Spleen (tissue), 13 donors: ENCODE measurements at regions of chr10 and their contacts with region 1.

Region 1: GRCh38 chr10:95246579-95247051 is 44.2 kb downstream of the PDLIM1 start:
- DNase-seq: peak; percentile 84
- H3K4me3 ChIP-seq: no peak overlapping the region
- H3K27ac ChIP-seq: peak overlapping the region in 6 of 8 donors; percentile 21 to 77 (median 38)
- H3K4me1 ChIP-seq: peaks cover 6 to 45% (median 28%) of the 10 kb centered on the region in 6 donors
- H3K27me3 ChIP-seq: no peaks in the 10 kb centered on the region
- CTCF ChIP-seq: peak; percentile 37 to 88 (median 81)
- POLR2A ChIP-seq: no peak

Region 2: DNA sequence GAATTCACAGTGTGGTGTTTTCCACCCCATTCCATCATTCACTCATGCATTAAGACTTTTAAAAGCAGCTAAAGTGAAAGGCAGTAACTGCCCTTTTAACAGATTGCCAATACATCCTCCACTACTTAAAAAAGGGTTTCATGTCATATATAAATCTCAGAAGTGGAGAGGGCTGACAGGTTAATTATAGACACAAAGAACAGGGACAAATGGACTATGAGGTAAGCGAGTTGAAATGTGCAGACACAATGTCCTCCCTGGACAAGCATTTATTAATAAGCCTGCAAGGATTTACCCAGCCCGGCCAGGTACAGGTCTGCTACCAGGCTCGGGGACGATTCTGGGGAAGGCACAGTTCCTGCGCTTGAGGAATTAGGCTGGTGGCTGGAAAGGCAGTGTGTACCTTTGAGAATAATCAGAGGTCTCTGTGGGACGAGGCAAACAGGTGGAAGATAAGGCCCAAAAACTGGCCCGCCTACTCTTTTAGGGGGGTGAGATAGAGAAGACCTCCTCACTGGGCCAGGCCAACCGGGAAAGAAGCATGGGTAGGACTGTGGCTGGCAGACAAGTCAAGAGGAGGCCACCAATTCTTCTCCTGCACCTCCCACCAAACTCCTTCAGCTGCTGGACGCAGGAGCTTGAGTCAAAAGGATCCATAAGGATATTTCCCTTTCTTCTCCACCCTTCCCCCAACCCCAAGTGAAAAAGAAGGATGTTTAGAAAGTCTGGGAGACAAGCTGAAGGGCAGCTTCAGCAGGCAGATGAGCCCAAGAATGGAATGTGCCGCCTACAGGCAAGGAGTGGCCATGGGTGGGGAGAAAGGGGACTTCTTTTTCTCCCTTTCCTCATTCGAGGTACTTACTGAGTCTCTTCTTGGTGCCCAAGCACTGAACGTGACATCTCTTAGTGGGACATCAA is 42.6 kb after region 1 on chr10:
- intact Hi-C with region 1: loop called (anchors 5 kb)
- DNase-seq: no peak
- H3K4me3 ChIP-seq: peak overlapping the region; percentile 52 to 84 (median 68)
- H3K27ac ChIP-seq: peak overlapping the region in 7 of 8 donors; percentile 91 to 96 (median 93)
- H3K4me1 ChIP-seq: peaks cover 41 to 98% (median 85%) of the 10 kb centered on the region in 6 donors
- H3K27me3 ChIP-seq: peaks cover 0 to 22% (median 0%) of the 10 kb centered on the region in 7 donors
- CTCF ChIP-seq: peak in 2 of 11 experiments; percentile 11 to 24
- POLR2A ChIP-seq: no peak

Region 3: DNA sequence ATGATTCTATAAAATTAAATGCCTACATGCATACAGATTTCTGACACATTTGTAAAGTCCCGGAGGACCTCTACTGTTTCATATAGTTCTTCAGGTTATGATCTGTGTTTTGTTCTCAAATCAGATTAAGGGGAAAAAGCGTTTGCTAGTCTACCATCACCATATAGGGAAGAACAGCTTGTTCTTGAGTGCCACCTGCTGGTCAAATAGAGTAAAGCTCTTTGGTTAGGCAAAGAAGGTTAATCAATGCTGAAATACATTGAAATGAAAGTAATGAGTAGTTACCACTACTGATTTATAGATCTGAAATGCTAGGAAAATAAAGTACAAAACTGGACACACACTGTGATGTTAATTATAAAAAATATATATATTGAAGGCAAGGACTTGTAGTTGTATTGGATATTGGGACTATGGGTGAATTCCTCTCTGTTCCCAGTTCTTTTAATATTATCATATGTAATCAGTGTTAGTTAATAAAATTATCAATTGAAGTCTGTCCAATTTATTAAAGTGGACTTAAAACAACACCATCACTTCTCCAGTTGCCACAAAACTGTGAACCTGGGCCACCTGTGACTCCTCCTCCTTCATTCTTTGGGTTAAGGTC is 116.8 kb after region 1 on chr10:
- intact Hi-C with region 1: loop called (anchors 2 kb)
- DNase-seq: no peak
- H3K4me3 ChIP-seq: no peak overlapping the region
- H3K27ac ChIP-seq: no peak overlapping the region
- H3K4me1 ChIP-seq: peaks cover 0 to 29% (median 7%) of the 10 kb centered on the region in 6 donors
- H3K27me3 ChIP-seq: no peaks in the 10 kb centered on the region
- CTCF ChIP-seq: peak; percentile 73 to 92 (median 89)
- POLR2A ChIP-seq: no peak